Caco-2 (cell line): ENCODE measurements at regions of chr15 and their contacts with region 1.

Region 1: GRCh38 chr15:28086175-28086703 is 12.9 kb downstream of the OCA2 start:
- DNase-seq: peak; percentile 75 to 80
- H3K4me3 ChIP-seq: no peak overlapping the region
- H3K4me3 Mint-ChIP-seq: no peak overlapping the region
- H3K27ac Mint-ChIP-seq: no peak overlapping the region
- H3K4me1 ChIP-seq: peaks cover 13% of the 10 kb centered on the region
- H3K4me1 Mint-ChIP-seq: no peaks in the 10 kb centered on the region
- H3K27me3 ChIP-seq: no peaks in the 10 kb centered on the region
- H3K27me3 Mint-ChIP-seq: no peaks in the 10 kb centered on the region
- CTCF ChIP-seq: peak; percentile 63 to 90

Region 2: GRCh38 chr15:28043691-28044091 is 42.5 kb before region 1 on chr15:
- CTCF ChIA-PET with region 1: no interaction called
- POLR2A ChIA-PET with region 1: no interaction called
- intact Hi-C with region 1: loop called (anchors 1 kb)
- DNase-seq: peak in 1 of 2 experiments; percentile 63
- H3K4me3 ChIP-seq: no peak overlapping the region
- H3K4me3 Mint-ChIP-seq: peak overlapping the region; percentile 7
- H3K27ac Mint-ChIP-seq: no peak overlapping the region
- H3K4me1 ChIP-seq: peaks cover 24% of the 10 kb centered on the region
- H3K4me1 Mint-ChIP-seq: peaks cover 15% of the 10 kb centered on the region
- H3K27me3 ChIP-seq: no peaks in the 10 kb centered on the region
- H3K27me3 Mint-ChIP-seq: no peaks in the 10 kb centered on the region
- CTCF ChIP-seq: no peak

Region 3: GRCh38 chr15:28075573-28075972 is 10.7 kb before region 1 on chr15:
- CTCF ChIA-PET with region 1: no interaction called
- POLR2A ChIA-PET with region 1: no interaction called
- intact Hi-C with region 1: no loop called
- DNase-seq: no peak
- H3K4me3 ChIP-seq: no peak overlapping the region
- H3K4me3 Mint-ChIP-seq: no peak overlapping the region
- H3K27ac Mint-ChIP-seq: no peak overlapping the region
- H3K4me1 ChIP-seq: no peaks in the 10 kb centered on the region
- H3K4me1 Mint-ChIP-seq: no peaks in the 10 kb centered on the region
- H3K27me3 ChIP-seq: no peaks in the 10 kb centered on the region
- H3K27me3 Mint-ChIP-seq: no peaks in the 10 kb centered on the region
- CTCF ChIP-seq: no peak

Region 4: GRCh38 chr15:28123408-28124023 is 37.3 kb after region 1 on chr15:
- CTCF ChIA-PET with region 1: no interaction called
- POLR2A ChIA-PET with region 1: no interaction called
- intact Hi-C with region 1: loop called (anchors 1 kb)
- DNase-seq: peak; percentile 80 to 86
- H3K4me3 ChIP-seq: no peak overlapping the region
- H3K4me3 Mint-ChIP-seq: no peak overlapping the region
- H3K27ac Mint-ChIP-seq: peak overlapping the region; percentile 58
- H3K4me1 ChIP-seq: no peaks in the 10 kb centered on the region
- H3K4me1 Mint-ChIP-seq: peaks cover 8% of the 10 kb centered on the region
- H3K27me3 ChIP-seq: no peaks in the 10 kb centered on the region
- H3K27me3 Mint-ChIP-seq: no peaks in the 10 kb centered on the region
- CTCF ChIP-seq: peak; percentile 76 to 83